Activated CD4-positive, alpha-beta memory T cell treated with anti-CD3 and anti-CD28 coated beads, Interleukin-2, amount 10 ng/mL, durations not matched to agents 7 days and 5 days (primary cell): ENCODE measurements at regions of chr22 and their contacts with region 1.

Region 1: DNA sequence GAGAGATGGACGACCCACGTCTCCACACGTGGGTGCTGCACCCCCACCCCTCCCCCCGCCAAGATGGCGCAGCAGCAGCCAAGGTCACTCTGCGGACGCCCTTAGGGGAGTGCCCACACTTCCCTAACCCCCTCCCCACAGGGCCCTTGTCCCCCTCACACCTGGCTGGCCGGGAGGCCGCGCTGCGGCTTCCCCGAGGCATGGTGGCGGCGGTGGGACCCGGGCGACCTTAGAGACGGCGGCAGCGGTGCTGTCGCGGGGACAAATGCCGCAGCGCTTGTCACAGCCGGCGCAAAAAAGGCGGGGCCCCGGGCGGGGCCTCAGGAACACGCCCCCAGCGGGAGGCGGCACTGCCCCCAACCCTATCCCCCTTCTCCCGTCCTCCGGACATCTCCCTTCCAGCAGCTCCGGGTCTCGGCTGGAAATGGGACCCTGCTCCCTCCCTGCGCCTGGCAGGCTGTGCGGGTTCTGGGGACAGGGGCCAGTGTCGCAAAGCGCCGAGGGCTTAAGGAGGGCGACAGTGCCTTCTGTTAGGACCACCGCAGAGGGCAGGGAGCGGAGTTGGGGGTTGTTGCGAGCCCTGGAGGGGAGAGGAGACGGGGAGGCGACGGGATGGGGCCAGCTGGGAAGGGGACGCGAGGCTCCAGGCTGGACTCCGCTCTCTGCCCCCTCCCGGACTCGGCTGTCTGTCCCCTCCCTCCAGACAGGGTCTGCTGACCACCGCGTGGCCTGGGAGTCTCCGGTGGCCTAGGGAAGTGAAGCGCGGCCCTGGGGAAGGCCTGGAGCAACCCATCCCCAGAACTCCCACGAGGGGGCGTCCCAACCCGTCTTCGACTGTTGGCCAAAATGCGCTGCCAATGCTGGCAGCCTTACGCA is at the start of gene CHCHD10:
- DNase-seq: peak; percentile 82
- H3K4me3 Mint-ChIP-seq: peak within 1 kb of the TSS; percentile 75
- H3K27ac Mint-ChIP-seq: peak within 1 kb of the TSS; percentile 54
- H3K4me1 Mint-ChIP-seq: peaks cover 51% of the 10 kb centered on the region
- H3K27me3 Mint-ChIP-seq: no peaks in the 10 kb centered on the region
- total RNA-seq, gene CHCHD10: 62.4 to 63.2 TPM

Region 2: DNA sequence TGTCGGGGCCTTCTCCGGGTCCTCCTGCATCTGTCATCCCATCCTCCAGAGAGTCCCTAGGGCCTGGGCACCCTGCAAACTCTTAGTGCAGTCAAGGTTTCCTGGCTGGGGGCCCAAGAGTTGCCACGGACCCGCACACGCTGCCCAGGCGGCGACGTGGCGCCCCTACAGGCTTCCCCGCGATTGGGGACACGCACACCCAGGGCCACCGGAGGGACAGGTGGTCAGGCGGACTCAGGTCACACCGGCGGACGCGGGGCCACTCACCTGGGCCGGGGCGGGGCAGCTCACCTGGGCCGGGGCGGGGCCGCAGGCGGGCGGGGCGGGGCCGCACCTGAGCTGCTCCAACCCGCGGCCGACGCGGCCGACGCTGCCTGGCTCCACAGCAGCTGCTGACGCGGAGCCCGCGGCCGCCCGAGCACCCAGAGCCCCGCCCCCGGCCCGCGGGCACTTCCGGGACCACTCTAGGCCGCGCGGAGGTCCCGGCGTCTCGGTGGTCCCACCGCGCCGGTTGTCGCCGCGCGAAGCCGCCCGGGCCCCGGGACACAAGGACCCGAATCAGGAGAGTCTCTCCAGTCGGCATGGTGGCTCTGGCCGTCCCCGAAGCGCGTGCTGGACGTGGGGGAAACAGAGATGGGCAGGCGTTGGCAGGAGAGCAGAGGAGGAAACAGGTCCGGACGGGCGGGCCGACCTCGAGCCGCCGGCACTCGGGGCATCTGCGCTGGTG is 17.0 kb before region 1 on chr22 and contains the start of gene ZNF70:
- CTCF ChIA-PET with region 1: no interaction called
- POLR2A ChIA-PET with region 1: interaction called, 18 read pairs
- DNase-seq: peak; percentile 85
- H3K4me3 Mint-ChIP-seq: peak within 1 kb of the TSS; percentile 68
- H3K27ac Mint-ChIP-seq: peak within 1 kb of the TSS; percentile 26
- H3K4me1 Mint-ChIP-seq: peaks cover 16% of the 10 kb centered on the region
- H3K27me3 Mint-ChIP-seq: no peaks in the 10 kb centered on the region
- total RNA-seq, gene ZNF70: 1.6 to 1.8 TPM

Region 3: GRCh38 chr22:23849009-23850006 is 81.4 kb after region 1 on chr22:
- CTCF ChIA-PET with region 1: interaction called, 25 read pairs
- POLR2A ChIA-PET with region 1: interaction called, 11 read pairs
- DNase-seq: peak; percentile 86
- H3K4me3 Mint-ChIP-seq: no peak overlapping the region
- H3K27ac Mint-ChIP-seq: no peak overlapping the region
- H3K4me1 Mint-ChIP-seq: peaks cover 17% of the 10 kb centered on the region
- H3K27me3 Mint-ChIP-seq: peaks cover 16% of the 10 kb centered on the region